ENCODE measurements at regions of chr2 and their contacts with region 1.

Region 1: DNA sequence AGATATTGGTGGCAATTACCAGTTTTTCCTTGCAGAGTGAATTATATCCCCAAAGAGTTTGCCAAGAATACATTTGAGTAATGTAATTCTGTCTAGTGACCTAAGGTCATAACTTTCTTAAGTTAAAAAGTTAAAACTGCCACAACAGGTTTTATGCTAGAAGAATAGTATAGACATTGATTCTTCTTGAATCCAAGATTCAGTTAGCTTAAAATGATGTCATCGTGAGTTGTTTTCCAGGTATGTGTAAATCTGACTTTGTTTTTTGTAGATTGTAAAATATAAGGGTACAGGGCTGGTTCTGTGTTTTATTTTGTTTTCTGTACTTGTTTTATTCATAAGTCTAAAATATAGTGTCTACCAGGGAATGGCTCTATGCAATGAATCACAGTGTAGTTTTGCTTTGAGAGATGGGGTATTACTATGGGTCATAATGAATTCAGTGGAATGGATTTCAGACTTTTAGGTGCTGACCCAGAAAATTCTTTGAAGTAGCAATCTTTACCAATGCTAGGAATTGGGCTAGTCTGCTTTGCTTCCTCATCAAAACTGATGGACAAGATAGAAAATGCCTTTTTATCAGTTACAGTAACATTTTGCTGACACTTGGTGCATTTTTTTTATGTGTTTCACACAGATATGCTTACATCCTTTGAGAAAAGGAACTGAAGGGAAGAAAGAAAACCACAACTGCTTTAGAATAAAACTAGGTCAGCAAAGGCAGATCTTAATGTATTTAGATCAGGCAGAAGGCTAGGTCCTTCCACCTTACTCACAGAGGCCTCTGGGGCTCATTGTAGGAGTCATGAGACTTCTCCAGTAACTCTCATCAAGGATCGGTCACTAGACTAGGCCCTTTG is 20.8 kb upstream of the MGAT5 start:
- DNase-seq: peak; percentile 52
- H3K4me3 Mint-ChIP-seq: peak overlapping the region; percentile 34
- H3K27ac Mint-ChIP-seq: peak overlapping the region; percentile 93
- H3K4me1 Mint-ChIP-seq: peaks cover 90% of the 10 kb centered on the region
- H3K27me3 Mint-ChIP-seq: no peaks in the 10 kb centered on the region

Region 2: GRCh38 chr2:133484106-133484505 is 749.0 kb before region 1 on chr2:
- CTCF ChIA-PET with region 1: no interaction called
- POLR2A ChIA-PET with region 1: no interaction called
- intact Hi-C with region 1: no loop called
- DNase-seq: no peak
- H3K4me3 Mint-ChIP-seq: no peak overlapping the region
- H3K27ac Mint-ChIP-seq: no peak overlapping the region
- H3K4me1 Mint-ChIP-seq: no peaks in the 10 kb centered on the region
- H3K27me3 Mint-ChIP-seq: no peaks in the 10 kb centered on the region

Region 3: DNA sequence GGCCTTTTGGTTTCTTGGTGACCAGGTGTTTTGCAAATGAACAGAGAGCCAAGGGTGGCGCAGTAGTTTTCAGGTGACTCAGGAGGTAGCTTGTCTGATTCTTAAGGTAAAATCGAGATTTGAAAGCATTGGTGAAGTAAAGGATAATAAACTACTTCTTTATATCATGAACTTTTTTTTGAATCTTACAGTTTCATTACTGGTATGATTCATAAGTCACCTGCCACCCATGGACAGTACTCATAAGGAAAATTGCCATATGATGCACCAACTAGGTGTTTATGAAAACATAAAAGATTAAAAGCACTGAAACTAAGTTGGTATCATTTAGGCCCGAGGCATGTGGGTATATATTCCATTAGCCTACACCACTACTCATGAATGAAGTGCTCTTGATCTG is 63.3 kb before region 1 on chr2:
- CTCF ChIA-PET with region 1: interaction called, 3 read pairs
- POLR2A ChIA-PET with region 1: interaction called, 3 read pairs
- intact Hi-C with region 1: loop called (anchors 1 kb)
- DNase-seq: peak; percentile 59
- H3K4me3 Mint-ChIP-seq: no peak overlapping the region
- H3K27ac Mint-ChIP-seq: peak overlapping the region; percentile 68
- H3K4me1 Mint-ChIP-seq: peaks cover 84% of the 10 kb centered on the region
- H3K27me3 Mint-ChIP-seq: no peaks in the 10 kb centered on the region

Region 4: DNA sequence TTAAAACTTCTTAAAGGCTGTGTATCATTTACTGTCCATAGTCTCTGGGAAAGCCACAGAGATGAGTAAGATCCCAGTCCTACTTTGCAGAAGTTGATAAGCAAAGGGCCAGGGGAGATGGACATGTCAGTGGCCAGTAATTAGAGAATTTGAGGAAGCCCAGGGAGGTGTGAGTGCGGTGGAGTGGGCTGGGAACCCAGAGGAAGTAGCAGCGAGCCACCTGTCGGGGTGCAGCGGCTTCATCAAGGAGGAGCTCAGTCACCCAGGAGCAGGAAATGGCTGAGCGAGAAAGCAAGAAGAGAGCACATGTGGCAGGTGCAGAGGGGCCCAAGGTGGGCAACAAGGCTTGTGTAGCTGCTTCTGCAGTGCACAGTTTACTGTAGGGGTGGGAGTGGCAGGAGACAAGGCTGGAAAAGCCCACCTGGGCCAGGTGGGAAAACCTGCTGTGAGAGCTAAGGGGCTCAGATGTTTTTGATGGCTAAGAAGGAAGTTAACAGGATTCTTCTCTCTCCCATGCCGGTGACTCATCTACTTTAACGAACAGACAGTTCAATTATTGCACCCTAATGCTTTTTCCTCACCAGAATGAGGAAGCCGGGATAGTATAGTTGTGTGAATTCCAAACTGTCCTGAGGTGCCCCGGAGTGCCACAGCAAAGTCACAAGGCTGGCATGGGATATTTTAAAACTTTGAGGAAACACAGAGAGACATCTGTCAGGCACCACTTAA is 14.0 kb before region 1 on chr2:
- CTCF ChIA-PET with region 1: interaction called, 23 read pairs
- POLR2A ChIA-PET with region 1: interaction called, 40 read pairs
- intact Hi-C with region 1: loop called (anchors 1 kb)
- DNase-seq: peak; percentile 56
- H3K4me3 Mint-ChIP-seq: peak overlapping the region; percentile 49
- H3K27ac Mint-ChIP-seq: peak overlapping the region; percentile 74
- H3K4me1 Mint-ChIP-seq: peaks cover 67% of the 10 kb centered on the region
- H3K27me3 Mint-ChIP-seq: no peaks in the 10 kb centered on the region

Region 5: DNA sequence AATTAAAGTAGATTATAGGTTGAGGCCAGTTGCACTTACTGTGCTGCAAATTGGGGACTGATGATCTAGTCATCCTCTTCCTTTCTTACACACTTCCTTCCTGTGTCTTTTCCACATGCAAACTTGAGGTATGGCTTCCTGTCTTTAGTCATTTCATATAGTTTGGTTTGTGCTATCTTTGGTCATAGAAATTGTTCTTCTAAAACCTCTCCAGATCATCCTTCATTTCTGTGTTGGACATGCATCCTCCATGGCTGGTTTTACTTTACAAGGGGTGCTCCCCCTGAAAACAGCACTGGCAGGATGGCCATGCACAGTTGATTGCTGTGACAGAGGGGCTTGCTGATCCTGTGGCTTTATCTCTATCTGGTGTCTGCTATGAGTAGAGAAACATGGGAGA is 57.3 kb after region 1 on chr2:
- CTCF ChIA-PET with region 1: interaction called, 3 read pairs
- POLR2A ChIA-PET with region 1: no interaction called
- intact Hi-C with region 1: loop called (anchors 1 kb)
- DNase-seq: peak; percentile 31
- H3K4me3 Mint-ChIP-seq: no peak overlapping the region
- H3K27ac Mint-ChIP-seq: no peak overlapping the region
- H3K4me1 Mint-ChIP-seq: peaks cover 21% of the 10 kb centered on the region
- H3K27me3 Mint-ChIP-seq: no peaks in the 10 kb centered on the region

Region 6: GRCh38 chr2:134368009-134368817 is 135.1 kb after region 1 on chr2:
- CTCF ChIA-PET with region 1: no interaction called
- POLR2A ChIA-PET with region 1: no interaction called
- intact Hi-C with region 1: no loop called
- DNase-seq: peak; percentile 18
- H3K4me3 Mint-ChIP-seq: no peak overlapping the region
- H3K27ac Mint-ChIP-seq: no peak overlapping the region
- H3K4me1 Mint-ChIP-seq: peaks cover 28% of the 10 kb centered on the region
- H3K27me3 Mint-ChIP-seq: no peaks in the 10 kb centered on the region

Region 7: GRCh38 chr2:134482131-134482723 is 249.1 kb after region 1 on chr2:
- CTCF ChIA-PET with region 1: no interaction called
- POLR2A ChIA-PET with region 1: no interaction called
- intact Hi-C with region 1: no loop called
- DNase-seq: no peak
- H3K4me3 Mint-ChIP-seq: no peak overlapping the region
- H3K27ac Mint-ChIP-seq: no peak overlapping the region
- H3K4me1 Mint-ChIP-seq: no peaks in the 10 kb centered on the region
- H3K27me3 Mint-ChIP-seq: peaks cover 12% of the 10 kb centered on the region

Region 8: GRCh38 chr2:134668821-134669220 is 435.7 kb after region 1 on chr2:
- CTCF ChIA-PET with region 1: no interaction called
- POLR2A ChIA-PET with region 1: no interaction called
- intact Hi-C with region 1: loop called (anchors 5 kb)
- DNase-seq: peak; percentile 95
- H3K4me3 Mint-ChIP-seq: no peak overlapping the region
- H3K27ac Mint-ChIP-seq: peak overlapping the region; percentile 13
- H3K4me1 Mint-ChIP-seq: peaks cover 65% of the 10 kb centered on the region
- H3K27me3 Mint-ChIP-seq: peaks cover 10% of the 10 kb centered on the region

Region 9: GRCh38 chr2:134982603-134983002 is 749.5 kb after region 1 on chr2:
- CTCF ChIA-PET with region 1: no interaction called
- POLR2A ChIA-PET with region 1: no interaction called
- intact Hi-C with region 1: no loop called
- DNase-seq: no peak
- H3K4me3 Mint-ChIP-seq: no peak overlapping the region
- H3K27ac Mint-ChIP-seq: no peak overlapping the region
- H3K4me1 Mint-ChIP-seq: no peaks in the 10 kb centered on the region
- H3K27me3 Mint-ChIP-seq: peaks cover 6% of the 10 kb centered on the region